ENCODE measurements at regions of chr2 and their contacts with region 1.

Region 1: GRCh38 chr2:138201286-138201685 is 237.0 kb downstream of the HNMT start:
- DNase-seq: no peak
- ATAC-seq: no peak
- H3K4me3 ChIP-seq: no peak overlapping the region
- H3K27ac ChIP-seq: no peak overlapping the region
- H3K4me1 ChIP-seq: no peaks in the 10 kb centered on the region
- H3K27me3 ChIP-seq: no peaks in the 10 kb centered on the region
- CTCF ChIP-seq: no peak

Region 2: DNA sequence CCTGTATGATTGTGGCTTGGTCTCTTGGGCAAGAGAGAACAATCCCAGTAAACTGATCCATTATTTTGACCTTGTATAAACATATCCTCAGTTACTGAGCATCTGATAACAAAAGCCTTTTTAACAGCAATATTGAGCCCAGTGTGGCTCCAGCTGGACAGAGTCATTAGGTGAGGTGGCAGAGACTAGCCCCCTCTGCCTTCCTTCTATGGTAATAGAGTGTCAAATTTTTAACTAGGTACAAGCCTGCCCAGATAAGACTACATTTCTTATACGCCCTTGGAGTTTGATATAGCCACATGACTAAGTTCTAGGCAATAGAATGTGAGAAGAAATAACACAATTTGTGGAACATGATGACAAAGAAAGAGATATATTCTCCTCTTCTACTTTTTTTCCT is 180.9 kb before region 1 on chr2:
- intact Hi-C with region 1: no loop called
- DNase-seq: no peak
- ATAC-seq: no peak
- H3K4me3 ChIP-seq: no peak overlapping the region
- H3K27ac ChIP-seq: no peak overlapping the region
- H3K4me1 ChIP-seq: peaks cover 0 to 7% (median 0%) of the 10 kb centered on the region in 9 donors
- H3K27me3 ChIP-seq: no peaks in the 10 kb centered on the region
- CTCF ChIP-seq: no peak

Region 3: GRCh38 chr2:138095336-138095735 is 106.0 kb before region 1 on chr2:
- intact Hi-C with region 1: loop called in 1 of 10 experiments (anchors 5 kb)
- DNase-seq: no peak
- ATAC-seq: no peak
- H3K4me3 ChIP-seq: no peak overlapping the region
- H3K27ac ChIP-seq: no peak overlapping the region
- H3K4me1 ChIP-seq: no peaks in the 10 kb centered on the region
- H3K27me3 ChIP-seq: no peaks in the 10 kb centered on the region
- CTCF ChIP-seq: no peak

Region 4: GRCh38 chr2:138147796-138148195 is 53.5 kb before region 1 on chr2:
- intact Hi-C with region 1: no loop called
- DNase-seq: no peak
- ATAC-seq: no peak
- H3K4me3 ChIP-seq: no peak overlapping the region
- H3K27ac ChIP-seq: no peak overlapping the region
- H3K4me1 ChIP-seq: no peaks in the 10 kb centered on the region
- H3K27me3 ChIP-seq: no peaks in the 10 kb centered on the region
- CTCF ChIP-seq: no peak

Region 5: DNA sequence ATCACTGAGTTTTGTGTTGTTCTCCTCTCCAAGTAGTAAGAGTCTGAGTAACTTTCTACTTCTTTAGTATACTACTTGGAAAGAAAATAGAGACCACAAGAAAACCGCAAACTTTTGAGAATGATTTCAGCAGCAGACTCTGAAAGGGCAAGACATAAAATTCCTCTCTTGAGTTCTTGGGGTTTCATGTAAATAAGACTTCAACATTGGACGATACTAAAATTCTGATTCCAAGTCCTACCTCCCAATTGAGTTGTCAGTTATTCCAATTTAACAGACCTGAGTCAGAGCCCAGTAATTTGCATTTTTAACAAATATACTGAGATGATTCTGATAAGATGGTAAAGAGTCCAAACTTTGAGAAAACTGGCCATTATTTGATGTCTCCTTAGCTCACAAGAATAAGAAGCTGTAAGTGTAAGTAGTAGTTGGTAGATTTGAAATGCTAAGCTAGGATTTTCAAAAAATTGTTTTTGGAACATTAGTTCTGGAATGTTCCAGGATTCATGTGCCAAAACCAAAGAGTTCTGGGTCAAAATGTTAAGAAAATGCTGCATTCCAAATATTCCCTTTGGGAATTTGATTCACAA is 38.7 kb after region 1 on chr2:
- intact Hi-C with region 1: no loop called
- DNase-seq: no peak
- ATAC-seq: peak in 3 of 8 donors; percentile 21 to 50 (median 39)
- H3K4me3 ChIP-seq: no peak overlapping the region
- H3K27ac ChIP-seq: peak overlapping the region in 5 of 10 donors; percentile 7 to 35 (median 21)
- H3K4me1 ChIP-seq: peaks cover 0 to 22% (median 13%) of the 10 kb centered on the region in 9 donors
- H3K27me3 ChIP-seq: no peaks in the 10 kb centered on the region
- CTCF ChIP-seq: no peak